ENCODE measurements at regions of chr13 and their contacts with region 1.

Region 1: GRCh38 chr13:83311886-83312577 is 570.2 kb downstream of the SLITRK1 start:
- DNase-seq: no peak
- H3K4me3 ChIP-seq: no peak overlapping the region
- H3K27ac ChIP-seq: no peak overlapping the region
- H3K4me1 ChIP-seq: no peaks in the 10 kb centered on the region
- H3K27me3 ChIP-seq: no peaks in the 10 kb centered on the region
- CTCF ChIP-seq: no peak
- EP300 ChIP-seq: no peak
- POLR2A ChIP-seq: no peak

Region 2: DNA sequence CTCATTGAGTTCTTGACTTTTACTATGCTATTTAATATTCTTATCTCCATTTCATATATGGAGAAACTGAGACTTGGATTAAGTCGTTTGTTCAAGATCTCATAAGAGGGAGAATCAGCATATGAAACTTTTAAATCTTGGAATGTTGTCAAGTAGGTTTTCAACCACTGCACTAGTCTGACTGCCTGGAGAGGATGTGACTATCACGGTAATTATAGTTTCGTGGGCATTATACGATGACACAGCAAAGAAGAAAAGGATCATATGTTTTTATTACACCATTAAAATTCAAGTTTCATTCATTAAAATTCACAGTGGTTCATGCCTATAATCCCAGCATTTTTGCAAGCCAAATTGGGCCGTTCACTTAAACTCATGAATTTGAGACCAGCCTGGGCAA is 15.1 kb after region 1 on chr13:
- intact Hi-C with region 1: loop called in 1 of 4 experiments (anchors 1 kb)
- DNase-seq: no peak
- H3K4me3 ChIP-seq: no peak overlapping the region
- H3K27ac ChIP-seq: no peak overlapping the region
- H3K4me1 ChIP-seq: no peaks in the 10 kb centered on the region
- H3K27me3 ChIP-seq: no peaks in the 10 kb centered on the region
- CTCF ChIP-seq: no peak
- EP300 ChIP-seq: no peak
- POLR2A ChIP-seq: no peak

Region 3: GRCh38 chr13:83613524-83613923 is 301.5 kb after region 1 on chr13:
- intact Hi-C with region 1: no loop called
- DNase-seq: no peak
- H3K4me3 ChIP-seq: no peak overlapping the region
- H3K27ac ChIP-seq: no peak overlapping the region
- H3K4me1 ChIP-seq: no peaks in the 10 kb centered on the region
- H3K27me3 ChIP-seq: no peaks in the 10 kb centered on the region
- CTCF ChIP-seq: no peak
- EP300 ChIP-seq: no peak
- POLR2A ChIP-seq: no peak

Measured in ovary (tissue), 10 donors.